MCF 10A (cell line): ENCODE measurements at regions of chr14 and their contacts with region 1.

Region 1: GRCh38 chr14:24431569-24432258 is 2.0 kb downstream of the KHNYN start:
- DNase-seq: peak; percentile 93
- H3K4me3 Mint-ChIP-seq: peak overlapping the region; percentile 80
- H3K27ac Mint-ChIP-seq: peak overlapping the region; percentile 91
- H3K4me1 Mint-ChIP-seq: peaks cover 25% of the 10 kb centered on the region
- H3K27me3 Mint-ChIP-seq: no peaks in the 10 kb centered on the region
- CTCF ChIP-seq: peak; percentile 83

Region 2: DNA sequence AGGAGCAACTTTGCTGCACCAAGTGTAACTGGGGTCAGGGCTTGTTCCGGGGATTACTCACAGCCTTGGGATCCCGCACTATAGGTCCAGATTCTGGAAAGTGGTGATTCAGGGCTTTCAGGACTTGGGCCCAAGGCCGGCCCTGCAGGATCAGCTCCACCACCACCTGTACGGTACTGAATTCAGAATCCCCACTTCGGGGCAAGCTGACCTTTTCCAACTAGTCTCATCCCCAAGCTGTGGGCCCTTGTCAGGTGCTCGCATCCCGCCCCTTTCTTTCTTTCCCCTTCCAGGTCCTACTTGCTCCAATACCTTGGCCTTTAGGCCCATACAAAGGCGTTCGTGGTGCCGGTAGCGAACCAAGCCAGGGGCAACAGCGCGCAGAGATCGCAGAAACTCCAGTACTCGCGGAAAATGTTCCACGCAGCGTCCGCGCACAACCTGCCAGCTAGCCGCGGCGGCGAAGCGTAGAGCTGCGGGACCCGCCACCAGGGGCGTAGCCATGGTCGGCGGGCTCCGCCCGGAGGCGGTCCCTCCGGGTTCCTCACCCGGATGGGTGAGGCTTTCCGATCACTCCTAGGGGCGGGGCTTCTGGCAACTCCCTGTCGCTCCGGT is 189.8 kb before region 1 on chr14:
- CTCF ChIA-PET with region 1: interaction called, 11 read pairs
- POLR2A ChIA-PET with region 1: interaction called, 6 read pairs
- intact Hi-C with region 1: no loop called
- DNase-seq: peak; percentile 94
- H3K4me3 Mint-ChIP-seq: peak overlapping the region; percentile 86
- H3K27ac Mint-ChIP-seq: peak overlapping the region; percentile 100
- H3K4me1 Mint-ChIP-seq: peaks cover 30% of the 10 kb centered on the region
- H3K27me3 Mint-ChIP-seq: no peaks in the 10 kb centered on the region
- CTCF ChIP-seq: peak; percentile 37

Region 3: GRCh38 chr14:24317141-24317928 is 114.4 kb before region 1 on chr14:
- CTCF ChIA-PET with region 1: interaction called, 135 read pairs
- POLR2A ChIA-PET with region 1: interaction called, 39 read pairs
- intact Hi-C with region 1: no loop called
- DNase-seq: peak; percentile 77
- H3K4me3 Mint-ChIP-seq: peak overlapping the region; percentile 8
- H3K27ac Mint-ChIP-seq: peak overlapping the region; percentile 79
- H3K4me1 Mint-ChIP-seq: peaks cover 20% of the 10 kb centered on the region
- H3K27me3 Mint-ChIP-seq: peaks cover 23% of the 10 kb centered on the region
- CTCF ChIP-seq: no peak

Region 4: GRCh38 chr14:24343795-24344660 is 87.7 kb before region 1 on chr14:
- CTCF ChIA-PET with region 1: interaction called, 626 read pairs
- POLR2A ChIA-PET with region 1: interaction called, 3 read pairs
- intact Hi-C with region 1: no loop called
- DNase-seq: no peak
- H3K4me3 Mint-ChIP-seq: no peak overlapping the region
- H3K27ac Mint-ChIP-seq: no peak overlapping the region
- H3K4me1 Mint-ChIP-seq: no peaks in the 10 kb centered on the region
- H3K27me3 Mint-ChIP-seq: peaks cover 13% of the 10 kb centered on the region
- CTCF ChIP-seq: no peak

Region 5: DNA sequence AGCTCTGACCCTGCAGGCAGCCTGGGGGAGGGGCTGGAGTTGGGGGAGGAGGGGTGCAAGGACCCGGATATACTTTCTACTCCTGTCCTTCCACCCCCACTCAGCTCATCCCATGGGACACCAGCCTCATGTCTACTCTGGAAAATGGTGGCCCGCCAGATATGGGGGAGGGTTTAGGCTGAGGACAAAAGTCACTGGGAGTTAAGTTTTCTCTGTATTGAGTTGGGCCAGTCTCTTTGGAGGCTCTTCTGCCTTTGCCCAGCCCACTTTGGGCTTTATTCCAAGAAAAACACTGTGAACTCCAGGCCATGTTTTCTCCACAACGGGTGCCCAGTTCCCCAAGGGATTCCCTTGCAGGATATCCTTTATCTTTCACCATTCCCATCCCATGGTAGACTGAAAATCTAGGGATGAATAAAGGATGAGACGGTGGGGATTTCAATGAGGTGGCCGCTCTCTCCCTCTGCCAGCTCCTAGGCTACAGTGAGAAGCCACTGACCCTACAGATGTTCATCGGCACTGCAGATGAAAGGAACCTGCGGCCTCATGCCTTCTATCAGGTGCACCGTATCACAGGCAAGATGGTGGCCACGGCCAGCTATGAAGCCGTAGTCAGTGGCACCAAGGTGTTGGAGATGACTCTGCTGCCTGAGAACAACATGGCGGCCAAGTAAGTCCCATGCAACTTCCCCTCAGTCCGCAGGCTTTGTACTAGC is 58.9 kb before region 1 on chr14:
- CTCF ChIA-PET with region 1: interaction called, 27 read pairs
- POLR2A ChIA-PET with region 1: interaction called, 5 read pairs
- intact Hi-C with region 1: no loop called
- DNase-seq: peak; percentile 57
- H3K4me3 Mint-ChIP-seq: no peak overlapping the region
- H3K27ac Mint-ChIP-seq: no peak overlapping the region
- H3K4me1 Mint-ChIP-seq: no peaks in the 10 kb centered on the region
- H3K27me3 Mint-ChIP-seq: no peaks in the 10 kb centered on the region
- CTCF ChIP-seq: no peak

Region 6: DNA sequence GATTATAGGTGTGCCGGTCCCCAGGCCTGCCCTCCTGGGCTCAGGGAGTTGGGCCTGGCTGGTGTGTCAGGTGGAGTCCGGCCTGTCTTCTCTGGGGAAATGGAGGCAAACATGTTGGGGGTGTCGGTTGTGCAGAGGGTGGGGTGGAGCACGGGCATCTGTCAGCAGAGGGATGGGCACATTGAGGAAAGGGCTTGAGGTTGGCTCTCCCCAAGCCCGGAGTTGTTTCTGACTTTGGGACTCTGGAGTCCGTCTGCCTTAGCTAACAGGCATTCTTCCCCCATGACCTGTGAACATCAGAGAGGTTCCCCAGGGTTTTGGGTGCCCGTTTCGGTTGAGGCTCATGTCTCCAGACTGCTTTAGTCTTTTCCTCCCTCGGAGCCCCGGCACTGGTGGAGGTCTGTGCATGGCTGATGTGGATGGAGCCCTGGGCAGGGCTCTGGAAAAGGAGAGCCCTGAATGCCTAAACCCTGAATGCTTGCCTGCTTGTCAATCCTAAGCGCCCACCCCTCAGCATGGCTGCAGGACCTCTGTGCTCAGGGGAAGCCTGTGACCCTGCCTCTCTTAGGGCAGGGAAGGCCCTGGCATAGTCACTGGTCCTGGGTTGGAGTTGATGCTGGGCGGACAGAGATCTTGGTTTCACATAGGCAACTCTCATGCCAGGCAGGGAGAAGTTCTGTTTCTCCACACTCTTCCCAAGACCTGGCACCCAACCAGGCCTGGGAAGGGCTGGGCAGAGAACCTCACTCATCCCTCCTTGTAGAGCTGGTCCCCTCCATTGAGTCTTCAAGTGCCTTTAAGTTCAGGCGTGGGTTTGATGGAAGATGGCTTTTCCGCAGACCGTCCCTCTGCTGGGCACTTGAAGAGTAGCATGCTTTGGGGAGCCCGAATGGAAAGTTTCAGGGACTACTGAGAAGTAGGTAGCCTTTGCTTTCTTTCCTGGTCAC is 20.0 kb before region 1 on chr14:
- CTCF ChIA-PET with region 1: interaction called, 23 read pairs
- POLR2A ChIA-PET with region 1: interaction called, 5 read pairs
- intact Hi-C with region 1: no loop called
- DNase-seq: peak; percentile 61
- H3K4me3 Mint-ChIP-seq: no peak overlapping the region
- H3K27ac Mint-ChIP-seq: no peak overlapping the region
- H3K4me1 Mint-ChIP-seq: no peaks in the 10 kb centered on the region
- H3K27me3 Mint-ChIP-seq: no peaks in the 10 kb centered on the region
- CTCF ChIP-seq: peak; percentile 58

Region 7: GRCh38 chr14:24576182-24576581 is 144.5 kb after region 1 on chr14 and contains the start of gene CTSG:
- CTCF ChIA-PET with region 1: no interaction called
- POLR2A ChIA-PET with region 1: no interaction called
- intact Hi-C with region 1: no loop called
- DNase-seq: no peak
- H3K4me3 Mint-ChIP-seq: no peak within 1 kb of the TSS
- H3K27ac Mint-ChIP-seq: no peak within 1 kb of the TSS
- H3K4me1 Mint-ChIP-seq: no peaks in the 10 kb centered on the region
- H3K27me3 Mint-ChIP-seq: peaks cover 6% of the 10 kb centered on the region
- CTCF ChIP-seq: no peak
- total RNA-seq, gene CTSG: not detected in 2 replicates